ENCODE measurements at regions of chr3 and their contacts with region 1.

Region 1: DNA sequence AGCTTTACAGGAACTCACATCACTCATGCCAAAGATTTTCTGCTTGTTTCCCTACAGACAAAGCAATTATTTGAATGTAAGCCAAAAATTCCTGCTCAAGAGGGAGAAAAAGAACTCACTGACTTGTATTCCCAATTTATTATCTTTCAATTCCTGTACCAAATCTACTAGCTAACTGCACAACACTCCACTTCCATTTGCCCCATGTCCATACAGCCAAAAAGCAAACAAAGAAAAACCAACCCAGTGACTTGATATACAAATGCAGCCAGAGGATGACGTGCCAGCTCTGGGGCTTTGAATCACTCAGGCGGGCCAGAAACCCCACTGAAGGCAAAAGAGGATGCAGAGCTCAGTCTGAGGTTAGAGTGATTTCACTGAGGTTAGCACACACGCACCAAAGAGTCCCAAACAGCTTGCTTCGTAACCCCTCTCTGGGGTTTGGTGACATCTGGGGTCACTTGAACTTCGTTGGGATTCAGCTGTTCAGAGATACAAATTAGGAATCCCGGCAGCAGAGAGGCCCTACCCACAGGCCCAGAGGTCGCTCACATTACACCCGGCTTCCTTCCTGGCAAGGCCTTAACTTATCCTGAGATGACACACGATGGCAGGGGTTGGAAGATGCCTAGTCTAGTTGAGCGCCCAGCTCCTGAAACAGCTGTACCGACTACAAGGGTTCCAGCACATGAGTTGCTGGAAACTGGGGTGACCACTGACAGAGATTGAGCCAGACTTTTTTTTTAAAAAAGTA is 1.6 kb downstream of the RFTN1 start:
- DNase-seq: peak; percentile 79
- H3K4me3 Mint-ChIP-seq: peak overlapping the region; percentile 97
- H3K27ac Mint-ChIP-seq: peak overlapping the region; percentile 89
- H3K4me1 Mint-ChIP-seq: peaks cover 83% of the 10 kb centered on the region
- H3K27me3 Mint-ChIP-seq: no peaks in the 10 kb centered on the region

Region 2: DNA sequence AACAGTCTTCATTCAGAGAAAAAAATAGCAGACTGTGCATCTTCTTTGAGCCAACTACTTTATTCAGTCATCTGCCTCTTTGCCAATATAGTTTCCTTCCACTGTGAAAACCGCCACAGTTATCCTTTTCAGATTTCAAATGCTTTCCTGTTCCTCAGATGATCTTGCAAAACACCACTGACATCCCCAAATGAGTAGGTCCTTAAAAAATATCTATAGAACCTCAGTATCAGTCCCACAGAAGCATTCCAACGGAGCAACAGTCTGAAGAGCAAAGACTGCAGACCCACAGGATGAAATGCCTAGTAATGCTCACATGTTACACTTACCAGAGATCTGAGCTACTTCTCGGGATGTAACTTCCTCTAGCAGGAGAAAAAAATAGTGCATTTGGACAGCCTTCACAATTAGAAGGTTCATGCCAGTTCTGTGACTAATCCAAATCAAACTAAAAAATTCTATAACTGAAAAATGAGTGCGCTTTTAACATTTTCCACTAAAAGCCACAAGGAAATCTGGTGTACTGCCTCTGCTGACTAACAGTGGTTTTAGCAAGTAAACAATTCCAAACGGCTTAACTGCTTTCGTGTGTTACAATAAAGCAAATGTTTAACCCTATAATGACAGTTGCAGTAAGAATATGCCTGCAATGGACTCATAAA is 714.1 kb before region 1 on chr3 and contains the start of gene ANKRD28:
- intact Hi-C with region 1: loop called (anchors 2 kb)
- DNase-seq: peak; percentile 27
- H3K4me3 Mint-ChIP-seq: peak within 1 kb of the TSS; percentile 88
- H3K27ac Mint-ChIP-seq: peak within 1 kb of the TSS; percentile 99
- H3K4me1 Mint-ChIP-seq: peaks cover 92% of the 10 kb centered on the region
- H3K27me3 Mint-ChIP-seq: no peaks in the 10 kb centered on the region
- total RNA-seq, gene ANKRD28: 39.6 and 42.9 TPM in 2 replicates

Region 3: DNA sequence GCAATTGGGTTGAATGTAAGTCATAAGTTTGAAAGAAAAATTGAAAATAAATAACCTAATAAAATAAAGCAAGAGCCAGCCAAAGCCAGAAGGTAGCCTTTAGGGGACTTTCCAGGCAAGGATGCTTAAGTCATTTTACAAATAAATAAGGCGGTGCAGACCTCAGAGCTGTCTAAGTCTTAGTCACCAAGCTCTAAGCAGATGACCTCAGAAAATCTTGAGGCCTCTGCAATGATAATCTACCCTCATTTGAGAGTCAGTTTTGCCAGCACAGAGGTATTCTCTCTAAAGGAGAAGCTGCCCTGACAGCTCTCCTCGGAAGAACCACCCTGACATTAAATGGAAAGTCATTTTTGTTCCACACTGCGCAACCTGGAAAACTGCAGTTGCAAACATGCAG is 132.9 kb before region 1 on chr3:
- intact Hi-C with region 1: loop called (anchors 1 kb)
- DNase-seq: peak; percentile 28
- H3K4me3 Mint-ChIP-seq: peak overlapping the region; percentile 31
- H3K27ac Mint-ChIP-seq: peak overlapping the region; percentile 94
- H3K4me1 Mint-ChIP-seq: peaks cover 95% of the 10 kb centered on the region
- H3K27me3 Mint-ChIP-seq: no peaks in the 10 kb centered on the region

Region 4: GRCh38 chr3:16476641-16477455 is 35.0 kb before region 1 on chr3:
- intact Hi-C with region 1: loop called (anchors 2 kb)
- DNase-seq: no peak
- H3K4me3 Mint-ChIP-seq: peak overlapping the region; percentile 32
- H3K27ac Mint-ChIP-seq: peak overlapping the region; percentile 5
- H3K4me1 Mint-ChIP-seq: peaks cover 73% of the 10 kb centered on the region
- H3K27me3 Mint-ChIP-seq: no peaks in the 10 kb centered on the region

Region 5: DNA sequence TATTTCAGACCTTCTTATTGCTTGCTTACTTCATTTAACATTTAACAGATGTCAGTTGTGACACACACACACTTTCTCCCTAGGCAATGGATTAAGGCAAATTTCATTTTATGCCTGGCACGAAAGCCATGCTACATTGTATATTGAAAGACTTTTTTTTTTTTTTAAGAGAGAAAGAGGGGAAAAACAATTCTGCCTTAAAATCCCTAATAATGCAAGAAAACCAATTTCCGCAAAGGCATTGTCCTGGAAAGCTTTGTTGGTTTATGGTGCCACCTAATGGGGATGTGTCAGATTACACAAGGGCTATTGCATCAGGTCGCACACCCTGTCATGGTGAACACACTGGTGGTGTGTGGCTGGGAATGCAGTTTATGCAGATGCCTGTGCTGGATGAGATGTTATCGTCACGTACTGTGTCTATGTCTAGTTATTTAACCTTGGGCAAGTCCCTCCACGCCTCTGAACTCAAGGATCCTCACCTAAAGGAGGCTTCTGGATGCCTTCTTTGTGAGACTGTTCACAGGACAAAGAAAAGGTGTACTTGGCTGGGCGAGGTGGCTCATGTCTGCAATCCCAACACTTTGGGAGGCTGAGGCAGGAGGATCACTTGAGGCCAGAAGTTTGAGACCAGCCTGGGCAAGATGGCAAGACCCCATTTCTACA is 39.0 kb after region 1 on chr3:
- intact Hi-C with region 1: loop called (anchors 1 kb)
- DNase-seq: peak; percentile 67
- H3K4me3 Mint-ChIP-seq: no peak overlapping the region
- H3K27ac Mint-ChIP-seq: peak overlapping the region; percentile 71
- H3K4me1 Mint-ChIP-seq: peaks cover 27% of the 10 kb centered on the region
- H3K27me3 Mint-ChIP-seq: peaks cover 6% of the 10 kb centered on the region

Measured in activated T-helper 1 cell treated with anti-CD3 and anti-CD28 coated beads, Interleukin-12 subunit alpha, Interleukin-12 subunit beta, Interleukin-2, Interleukin-4 antibody, amounts not matched to agents 30 ng/mL and 10 ng/mL and 1 ng/mL, durations not matched to agents 14 hours and 24 hours and 36 hours (primary cell).